PC-9 (cell line): ENCODE measurements at regions of chr9 and their contacts with region 1.

Region 1: DNA sequence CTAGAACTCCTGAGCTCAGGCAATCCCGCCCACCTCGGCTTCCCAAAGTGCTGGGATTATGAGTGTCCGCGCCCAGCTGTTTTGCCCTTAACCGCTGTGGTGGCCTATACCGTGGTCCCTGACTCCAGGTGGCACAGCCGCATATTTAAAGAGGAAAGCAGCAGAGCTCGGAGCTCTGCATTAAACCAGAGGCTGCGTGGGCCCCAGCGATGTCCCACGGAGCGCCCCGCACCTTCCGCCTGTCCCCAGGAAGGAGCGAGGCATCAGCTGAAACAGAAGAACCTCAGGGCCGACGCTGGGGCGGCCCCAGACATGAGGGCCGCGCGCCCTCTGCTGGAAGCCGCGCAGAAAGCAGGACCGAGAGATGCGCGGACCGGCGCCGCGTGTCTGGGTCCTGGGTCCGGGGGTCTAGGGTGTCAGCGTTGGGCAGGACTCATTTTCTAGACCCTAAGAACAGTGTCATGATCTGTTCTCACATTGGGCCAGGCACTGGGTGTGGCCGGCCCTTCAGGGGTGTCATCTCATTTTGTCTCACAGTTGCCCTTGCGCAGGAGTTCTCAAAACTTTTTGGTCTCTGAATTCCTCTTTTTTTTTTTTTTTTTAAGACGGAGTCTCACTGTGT is 37.7 kb downstream of the LAMC3 start:
- DNase-seq: peak in 1 of 2 experiments; percentile 72
- H3K4me3 ChIP-seq: peak overlapping the region; percentile 2; the same call in 1 of the 2 replicates
- H3K27ac ChIP-seq: no peak overlapping the region
- H3K4me1 ChIP-seq: no peaks in the 10 kb centered on the region
- H3K27me3 ChIP-seq: peaks cover 10% of the 10 kb centered on the region; the same call in 1 of the 2 replicates
- CTCF ChIP-seq: peak; percentile 94

Region 2: DNA sequence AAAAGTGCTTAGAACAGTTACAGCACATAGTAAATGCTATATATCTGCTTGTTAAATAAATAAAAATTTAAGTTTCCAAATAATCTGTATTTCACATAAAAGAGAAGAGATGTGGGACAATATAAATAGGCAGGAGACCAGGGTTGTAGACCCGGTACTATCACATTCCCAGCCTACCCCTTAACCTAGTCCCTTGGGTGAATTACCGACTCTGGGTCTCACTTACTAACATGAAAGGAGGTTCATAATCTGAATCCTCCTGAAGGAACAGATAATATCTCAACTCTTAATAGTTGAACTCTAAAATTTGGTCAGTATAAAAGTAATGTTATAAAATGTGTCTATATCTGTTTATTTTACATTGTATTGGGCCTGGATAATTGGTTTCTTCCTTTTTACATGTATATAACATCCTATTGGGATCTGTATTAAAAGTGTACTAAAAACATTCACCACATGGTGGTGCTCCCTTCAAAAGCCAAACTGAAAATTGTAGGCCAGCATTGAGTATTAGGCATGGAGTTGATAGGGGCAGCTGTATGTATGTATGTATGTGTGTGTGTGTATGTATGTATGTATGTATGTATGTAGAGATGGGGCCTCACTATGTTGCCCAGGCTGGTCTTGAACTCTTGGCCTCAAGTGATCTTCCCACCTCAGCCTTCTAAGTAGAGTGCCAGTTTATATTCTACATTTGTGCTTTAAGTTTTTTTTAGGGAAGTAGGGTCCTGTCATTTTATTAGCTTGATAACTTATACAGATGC is 275.8 kb before region 1 on chr9:
- CTCF ChIA-PET with region 1: no interaction called
- POLR2A ChIA-PET with region 1: no interaction called
- intact Hi-C with region 1: loop called (anchors 2 kb)
- DNase-seq: peak; percentile 7 to 46
- H3K4me3 ChIP-seq: no peak overlapping the region
- H3K27ac ChIP-seq: no peak overlapping the region
- H3K4me1 ChIP-seq: no peaks in the 10 kb centered on the region
- H3K27me3 ChIP-seq: no peaks in the 10 kb centered on the region
- CTCF ChIP-seq: peak; percentile 80

Region 3: GRCh38 chr9:130940693-130941576 is 105.8 kb before region 1 on chr9:
- CTCF ChIA-PET with region 1: interaction called, 6 read pairs
- POLR2A ChIA-PET with region 1: no interaction called
- intact Hi-C with region 1: loop called (anchors 5 kb)
- DNase-seq: peak; percentile 85 to 96
- H3K4me3 ChIP-seq: no peak overlapping the region; the same call in 1 of the 2 replicates
- H3K27ac ChIP-seq: no peak overlapping the region
- H3K4me1 ChIP-seq: peaks cover 14% of the 10 kb centered on the region
- H3K27me3 ChIP-seq: peaks cover 17% of the 10 kb centered on the region; the same call in 1 of the 2 replicates
- CTCF ChIP-seq: peak; percentile 91

Region 4: DNA sequence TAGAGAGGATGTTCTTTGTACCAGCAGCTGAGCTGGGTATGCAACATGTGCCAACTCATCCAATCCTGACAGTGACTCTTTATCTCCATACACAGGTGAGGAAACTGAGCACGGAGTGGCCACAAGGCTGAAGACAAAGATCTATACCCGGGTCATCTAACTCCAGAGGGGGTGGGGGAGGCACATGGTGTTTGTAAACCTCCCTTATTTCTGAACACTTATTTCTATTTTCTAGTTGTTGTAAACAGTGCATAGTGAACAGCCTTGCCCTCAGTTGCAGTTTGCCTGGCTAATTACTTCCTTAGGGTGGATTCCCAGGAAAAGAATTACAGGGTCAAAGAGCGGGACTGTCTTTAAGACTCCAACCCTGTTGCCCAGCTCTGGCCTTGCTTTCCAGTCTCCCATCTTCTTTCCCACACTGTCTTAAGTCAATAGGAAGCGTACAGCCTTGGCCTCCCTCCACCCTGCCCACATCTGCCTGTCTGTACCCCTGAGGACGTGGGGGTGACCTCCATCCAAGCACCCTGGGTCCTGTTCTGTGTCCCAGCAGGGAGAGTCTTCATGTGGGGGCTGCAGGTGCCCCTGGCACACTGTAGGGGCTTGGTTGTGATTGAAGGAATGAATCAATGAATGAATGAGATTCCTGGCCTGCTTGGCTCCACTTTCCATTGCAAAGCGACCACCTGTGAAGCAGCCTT is 94.5 kb before region 1 on chr9:
- CTCF ChIA-PET with region 1: no interaction called
- POLR2A ChIA-PET with region 1: no interaction called
- intact Hi-C with region 1: no loop called
- DNase-seq: no peak
- H3K4me3 ChIP-seq: no peak overlapping the region
- H3K27ac ChIP-seq: no peak overlapping the region
- H3K4me1 ChIP-seq: peaks cover 6% of the 10 kb centered on the region
- H3K27me3 ChIP-seq: peaks cover 43% of the 10 kb centered on the region
- CTCF ChIP-seq: no peak

Region 5: GRCh38 chr9:131008909-131009618 is 37.6 kb before region 1 on chr9 and contains the start of gene LAMC3:
- CTCF ChIA-PET with region 1: interaction called, 18 read pairs
- POLR2A ChIA-PET with region 1: no interaction called
- intact Hi-C with region 1: loop called (anchors 5 kb)
- DNase-seq: peak in 1 of 2 experiments; percentile 17
- H3K4me3 ChIP-seq: no peak within 1 kb of the TSS
- H3K27ac ChIP-seq: no peak within 1 kb of the TSS
- H3K4me1 ChIP-seq: no peaks in the 10 kb centered on the region
- H3K27me3 ChIP-seq: peaks cover 14% of the 10 kb centered on the region; the same call in 1 of the 2 replicates
- CTCF ChIP-seq: no peak
- total RNA-seq, gene LAMC3: 0.38 and 0.41 TPM in 2 replicates